IMR-90 (cell line): ENCODE measurements at regions of chr15 and their contacts with region 1.

Region 1: DNA sequence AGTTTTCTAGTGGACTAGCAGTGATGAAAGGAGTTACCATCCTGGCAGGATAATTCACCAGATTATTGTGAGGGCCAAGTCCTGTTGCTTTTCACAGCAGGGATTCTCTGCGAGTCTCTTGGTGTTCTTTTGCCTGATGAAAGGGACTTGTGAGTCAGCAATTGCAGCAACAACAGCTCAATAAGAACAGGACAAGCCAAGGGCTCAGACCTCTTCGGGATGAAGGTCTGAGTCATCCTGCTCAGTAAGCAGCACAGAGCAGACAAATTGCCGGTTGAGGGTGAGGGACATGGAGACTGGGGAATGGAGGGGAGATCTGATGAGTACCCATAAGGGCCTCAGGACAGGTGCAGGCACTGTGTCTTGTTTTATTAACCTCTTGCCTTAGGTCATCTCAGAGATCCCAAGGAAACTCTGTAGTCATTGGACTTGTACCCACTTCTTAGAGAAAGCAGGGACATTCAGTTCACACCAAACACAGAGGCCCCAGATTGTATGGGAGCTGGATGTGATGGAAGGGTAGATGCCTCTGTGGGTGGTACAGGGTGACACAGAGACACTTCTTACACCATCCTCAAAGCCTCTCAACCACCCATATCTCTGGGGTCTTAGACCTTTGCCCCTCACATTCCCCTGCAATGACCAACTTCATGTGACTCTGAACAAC is 173.8 kb upstream of the TLE3 start:
- DNase-seq: peak; percentile 95
- ATAC-seq: peak; percentile 98
- H3K4me3 ChIP-seq: no peak overlapping the region
- H3K27ac ChIP-seq: no peak overlapping the region
- H3K4me1 ChIP-seq: peaks cover 5% of the 10 kb centered on the region; the same call in 1 of the 2 replicates
- H3K27me3 ChIP-seq: peaks cover 24% of the 10 kb centered on the region
- CTCF ChIP-seq: no peak
- POLR2A ChIP-seq: no peak
- RAD21 ChIP-seq: 0 out of 2 replicates have a peak, but pooled peaks have one; percentile 8

Region 2: DNA sequence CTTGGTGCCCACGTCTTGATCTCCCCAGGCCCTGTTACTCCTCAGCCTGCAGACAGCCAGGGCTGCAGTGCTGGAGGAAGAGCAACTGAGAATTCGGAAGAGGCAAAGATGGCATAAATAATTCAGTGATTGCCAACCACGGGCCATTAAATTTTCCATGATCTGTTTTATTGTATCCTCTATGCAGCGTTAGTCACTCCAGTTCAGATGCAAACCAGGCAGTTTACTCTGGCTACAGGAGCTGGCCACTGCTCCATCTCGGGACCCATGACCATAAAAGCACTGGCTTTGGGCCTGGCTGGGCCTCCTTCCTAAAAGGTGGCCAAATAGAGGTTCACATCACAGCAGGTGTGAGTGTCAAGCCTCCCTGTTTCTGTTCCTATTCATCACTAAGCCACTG is 36.2 kb before region 1 on chr15:
- CTCF ChIA-PET with region 1: no interaction called
- POLR2A ChIA-PET with region 1: no interaction called
- dilution Hi-C with region 1: no loop called
- in situ Hi-C with region 1: no loop called
- intact Hi-C with region 1: loop called (anchors 1 kb)
- DNase-seq: no peak
- ATAC-seq: no peak
- H3K4me3 ChIP-seq: no peak overlapping the region
- H3K27ac ChIP-seq: no peak overlapping the region
- H3K4me1 ChIP-seq: peaks cover 2% of the 10 kb centered on the region; the same call in 1 of the 2 replicates
- H3K27me3 ChIP-seq: peaks cover 17% of the 10 kb centered on the region
- CTCF ChIP-seq: no peak
- POLR2A ChIP-seq: no peak
- RAD21 ChIP-seq: no peak

Region 3: GRCh38 chr15:70362886-70363285 is 91.3 kb after region 1 on chr15:
- CTCF ChIA-PET with region 1: no interaction called
- POLR2A ChIA-PET with region 1: no interaction called
- dilution Hi-C with region 1: no loop called
- in situ Hi-C with region 1: no loop called
- intact Hi-C with region 1: no loop called
- DNase-seq: peak; percentile 18
- ATAC-seq: peak; percentile 83
- H3K4me3 ChIP-seq: no peak overlapping the region
- H3K27ac ChIP-seq: no peak overlapping the region
- H3K4me1 ChIP-seq: no peaks in the 10 kb centered on the region
- H3K27me3 ChIP-seq: peaks cover 25% of the 10 kb centered on the region; the same call in 1 of the 2 replicates
- CTCF ChIP-seq: peak; percentile 47
- POLR2A ChIP-seq: no peak
- RAD21 ChIP-seq: peak; percentile 63